A673 (cell line): ENCODE measurements at regions of chr19 and their contacts with region 1.

Region 1: DNA sequence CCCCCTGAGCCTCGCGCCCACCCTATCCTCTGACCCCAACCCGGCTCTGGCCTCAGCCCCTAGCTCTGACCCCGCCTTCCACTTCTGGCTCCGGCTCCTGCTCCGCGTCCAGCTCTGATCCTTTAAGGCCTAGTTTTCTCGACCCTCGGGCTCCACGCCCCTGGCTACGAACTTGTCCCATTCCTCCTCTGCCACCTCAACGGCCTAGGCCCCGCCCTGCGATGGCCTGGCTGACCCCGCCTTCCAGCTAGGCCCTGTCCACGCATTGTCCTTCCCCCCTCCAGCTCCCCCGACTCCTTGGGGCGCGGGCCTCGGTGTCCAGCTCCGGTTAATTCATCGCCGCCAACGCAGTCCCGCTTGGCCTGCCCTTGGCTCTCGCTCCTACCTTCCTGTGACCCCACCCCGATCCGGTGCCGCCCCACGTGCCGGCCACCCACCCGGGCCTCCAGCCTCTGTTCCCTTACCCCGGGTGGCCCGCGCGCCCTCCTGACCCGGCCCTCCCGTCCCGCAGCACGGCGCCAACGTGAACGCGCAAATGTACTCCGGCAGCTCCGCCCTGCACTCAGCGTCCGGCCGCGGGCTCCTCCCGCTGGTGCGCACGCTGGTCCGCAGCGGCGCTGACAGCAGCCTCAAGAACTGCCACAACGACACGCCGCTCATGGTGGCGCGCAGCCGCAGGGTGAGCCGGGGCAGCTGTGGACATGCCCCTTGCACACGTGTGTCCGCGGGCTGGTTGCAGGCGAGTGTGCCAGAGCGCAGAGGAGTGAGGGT is 9.4 kb downstream of the BCL3 start:
- DNase-seq: peak; percentile 57
- H3K4me3 ChIP-seq: peak overlapping the region; percentile 48
- H3K27ac ChIP-seq: peak overlapping the region; percentile 53
- H3K4me1 ChIP-seq: peaks cover 25% of the 10 kb centered on the region
- H3K27me3 ChIP-seq: no peaks in the 10 kb centered on the region
- CTCF ChIP-seq: no peak

Region 2: DNA sequence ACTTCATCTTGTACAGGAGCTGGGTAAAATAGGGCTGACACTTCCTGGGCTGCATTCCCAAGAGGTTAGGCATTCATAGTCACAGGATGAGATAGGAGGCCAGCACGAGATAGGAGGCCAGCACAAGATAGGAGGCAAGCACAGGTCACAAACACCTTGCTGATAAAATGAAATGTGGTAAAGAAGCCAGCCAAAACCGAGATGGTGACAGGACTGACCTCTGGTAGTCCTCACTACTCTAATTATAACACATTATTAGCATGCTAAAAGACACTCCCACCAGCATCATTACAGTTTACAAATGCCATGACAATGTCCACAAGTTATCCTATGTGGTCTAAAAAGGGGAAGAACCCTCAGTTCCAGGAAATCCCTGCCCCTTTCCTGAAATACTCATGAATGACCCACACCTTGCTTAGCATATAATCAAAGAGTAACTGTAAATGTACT is 165.5 kb before region 1 on chr19:
- CTCF ChIA-PET with region 1: no interaction called
- POLR2A ChIA-PET with region 1: interaction called, 17 read pairs
- intact Hi-C with region 1: no loop called
- DNase-seq: no peak
- H3K4me3 ChIP-seq: no peak overlapping the region
- H3K27ac ChIP-seq: no peak overlapping the region
- H3K4me1 ChIP-seq: peaks cover 12% of the 10 kb centered on the region
- H3K27me3 ChIP-seq: no peaks in the 10 kb centered on the region
- CTCF ChIP-seq: no peak

Region 3: GRCh38 chr19:44677019-44677821 is 80.7 kb before region 1 on chr19:
- CTCF ChIA-PET with region 1: no interaction called
- POLR2A ChIA-PET with region 1: no interaction called
- intact Hi-C with region 1: no loop called
- DNase-seq: peak; percentile 85
- H3K4me3 ChIP-seq: peak overlapping the region; percentile 21
- H3K27ac ChIP-seq: peak overlapping the region; percentile 70
- H3K4me1 ChIP-seq: peaks cover 7% of the 10 kb centered on the region
- H3K27me3 ChIP-seq: no peaks in the 10 kb centered on the region
- CTCF ChIP-seq: no peak

Region 4: DNA sequence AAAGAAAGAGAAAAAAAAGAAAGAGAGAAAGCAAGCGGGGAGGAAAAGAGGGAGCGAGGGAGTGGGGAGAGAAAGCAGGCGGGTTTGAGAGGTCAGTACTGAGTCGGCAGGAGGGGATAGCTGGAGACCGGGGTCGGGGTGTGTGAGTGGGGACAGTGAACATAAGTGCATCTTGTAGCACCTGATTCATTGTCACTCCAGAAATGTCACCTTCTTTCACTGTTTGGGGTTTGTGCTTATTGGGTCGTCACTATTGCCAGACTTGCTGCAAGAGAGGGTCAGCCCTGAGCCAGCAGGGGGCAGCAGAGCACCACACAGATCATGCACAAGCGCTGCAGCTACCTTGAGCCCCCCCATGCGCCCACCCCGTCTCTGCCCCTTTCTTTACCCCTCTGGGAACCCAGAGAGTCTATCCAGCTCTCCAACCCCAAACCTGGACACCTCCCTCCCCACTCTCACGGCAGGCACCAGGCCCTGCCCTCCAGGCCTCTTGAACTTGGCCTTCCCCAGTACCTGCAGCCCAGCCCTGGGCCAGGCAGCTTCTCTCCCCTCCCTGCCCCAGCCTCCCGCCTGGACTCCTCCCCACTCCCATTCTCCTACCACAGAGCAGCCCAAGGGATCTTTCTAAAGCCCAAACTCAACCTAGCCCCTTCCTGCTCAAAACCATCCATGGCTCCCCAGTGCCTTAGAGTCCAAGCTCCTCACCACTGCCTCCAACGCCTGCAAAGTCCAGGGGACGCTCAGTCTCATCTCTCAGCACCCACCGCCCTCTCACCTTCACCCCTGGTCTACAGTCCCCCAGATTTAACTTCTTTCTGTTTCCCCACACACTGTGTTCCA is 68.6 kb before region 1 on chr19:
- CTCF ChIA-PET with region 1: no interaction called
- POLR2A ChIA-PET with region 1: no interaction called
- intact Hi-C with region 1: no loop called
- DNase-seq: peak; percentile 76
- H3K4me3 ChIP-seq: peak overlapping the region; percentile 11
- H3K27ac ChIP-seq: no peak overlapping the region
- H3K4me1 ChIP-seq: no peaks in the 10 kb centered on the region
- H3K27me3 ChIP-seq: no peaks in the 10 kb centered on the region
- CTCF ChIP-seq: peak; percentile 92